Activated CD8-positive, alpha-beta T cell treated with anti-CD3 and anti-CD28 coated beads for 36 hours (primary cell): ENCODE measurements at regions of chr5 and their contacts with region 1.

Region 1: DNA sequence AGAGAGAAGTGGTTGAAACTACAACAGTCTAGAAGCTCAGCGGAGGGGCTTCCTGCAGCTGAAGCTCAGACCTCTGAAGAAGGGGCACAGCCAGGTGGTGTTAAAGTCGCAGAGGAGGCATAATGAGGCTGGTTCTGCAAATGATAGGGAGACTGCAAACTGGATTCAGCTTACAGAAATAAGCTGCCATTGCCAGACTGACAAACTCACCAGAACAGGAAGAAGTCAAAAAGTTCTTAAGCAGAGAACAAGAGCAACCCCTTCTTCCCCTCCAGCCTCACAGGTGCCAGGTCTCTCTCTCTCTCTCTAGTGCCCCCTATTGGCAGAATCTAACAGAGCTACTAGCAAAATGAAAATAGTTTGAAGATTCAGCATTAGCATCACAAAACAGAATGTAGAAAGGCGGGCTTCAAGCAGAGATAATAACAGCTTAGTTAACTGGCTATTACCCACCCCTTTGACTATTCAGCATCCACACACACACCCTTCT is 76.7 kb downstream of the GRAMD2B start:
- DNase-seq: peak; percentile 29
- ATAC-seq: peak; percentile 81
- H3K4me3 Mint-ChIP-seq: no peak overlapping the region
- H3K27ac Mint-ChIP-seq: no peak overlapping the region
- H3K4me1 Mint-ChIP-seq: peaks cover 22% of the 10 kb centered on the region
- H3K27me3 Mint-ChIP-seq: no peaks in the 10 kb centered on the region
- CTCF ChIP-seq: peak; percentile 69

Region 2: GRCh38 chr5:126354012-126354857 is 145.7 kb before region 1 on chr5:
- CTCF ChIA-PET with region 1: interaction called, 53 read pairs
- POLR2A ChIA-PET with region 1: no interaction called
- intact Hi-C with region 1: loop called (anchors 5 kb)
- DNase-seq: no peak
- ATAC-seq: peak; percentile 75
- H3K4me3 Mint-ChIP-seq: peak overlapping the region; percentile 57
- H3K27ac Mint-ChIP-seq: peak overlapping the region; percentile 47
- H3K4me1 Mint-ChIP-seq: peaks cover 14% of the 10 kb centered on the region
- H3K27me3 Mint-ChIP-seq: no peaks in the 10 kb centered on the region
- CTCF ChIP-seq: peak; percentile 69

Region 3: GRCh38 chr5:126471875-126472537 is 27.9 kb before region 1 on chr5:
- CTCF ChIA-PET with region 1: interaction called, 17 read pairs
- POLR2A ChIA-PET with region 1: no interaction called
- intact Hi-C with region 1: no loop called
- DNase-seq: no peak
- ATAC-seq: no peak
- H3K4me3 Mint-ChIP-seq: no peak overlapping the region
- H3K27ac Mint-ChIP-seq: no peak overlapping the region
- H3K4me1 Mint-ChIP-seq: no peaks in the 10 kb centered on the region
- H3K27me3 Mint-ChIP-seq: no peaks in the 10 kb centered on the region
- CTCF ChIP-seq: no peak

Region 4: GRCh38 chr5:126519634-126520592 is 20.0 kb after region 1 on chr5:
- CTCF ChIA-PET with region 1: interaction called, 15 read pairs
- POLR2A ChIA-PET with region 1: no interaction called
- intact Hi-C with region 1: no loop called
- DNase-seq: no peak
- ATAC-seq: no peak
- H3K4me3 Mint-ChIP-seq: no peak overlapping the region
- H3K27ac Mint-ChIP-seq: no peak overlapping the region
- H3K4me1 Mint-ChIP-seq: peaks cover 1% of the 10 kb centered on the region
- H3K27me3 Mint-ChIP-seq: no peaks in the 10 kb centered on the region
- CTCF ChIP-seq: no peak

Region 5: DNA sequence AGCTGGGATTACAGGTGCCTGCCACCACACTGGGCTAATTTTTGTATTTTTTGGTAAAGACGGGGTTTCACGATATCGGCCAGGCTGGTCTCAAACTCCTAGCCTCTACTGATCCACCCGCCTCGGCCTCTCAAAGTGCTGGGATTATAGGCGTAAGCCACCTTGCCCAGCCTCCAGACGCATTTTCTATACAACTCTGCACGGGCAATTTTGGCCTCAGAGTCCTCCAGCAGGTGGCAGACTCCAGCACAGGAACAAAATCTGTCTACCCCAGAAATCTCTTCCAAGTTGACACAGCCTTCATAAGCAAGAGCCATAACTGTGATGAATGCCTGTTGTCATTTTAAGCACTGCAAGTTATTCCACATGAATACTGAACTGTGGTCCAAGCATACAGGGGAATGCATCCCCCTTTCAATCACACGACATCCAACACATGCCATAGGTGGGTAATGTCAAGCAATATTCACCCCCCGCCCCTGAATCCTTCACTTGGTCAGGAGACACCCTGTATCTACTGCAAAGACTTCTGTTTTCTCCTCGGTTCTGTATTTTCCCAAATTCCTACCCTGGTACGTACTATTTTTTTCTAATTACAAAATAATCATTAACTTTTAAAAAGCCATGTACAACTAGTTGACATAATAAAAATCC is 44.3 kb after region 1 on chr5:
- CTCF ChIA-PET with region 1: interaction called, 23 read pairs
- POLR2A ChIA-PET with region 1: no interaction called
- intact Hi-C with region 1: no loop called
- DNase-seq: peak; percentile 53
- ATAC-seq: peak; percentile 53
- H3K4me3 Mint-ChIP-seq: no peak overlapping the region
- H3K27ac Mint-ChIP-seq: no peak overlapping the region
- H3K4me1 Mint-ChIP-seq: no peaks in the 10 kb centered on the region
- H3K27me3 Mint-ChIP-seq: no peaks in the 10 kb centered on the region
- CTCF ChIP-seq: peak; percentile 49